ENCODE measurements at regions of chr7 and their contacts with region 1.

Region 1: DNA sequence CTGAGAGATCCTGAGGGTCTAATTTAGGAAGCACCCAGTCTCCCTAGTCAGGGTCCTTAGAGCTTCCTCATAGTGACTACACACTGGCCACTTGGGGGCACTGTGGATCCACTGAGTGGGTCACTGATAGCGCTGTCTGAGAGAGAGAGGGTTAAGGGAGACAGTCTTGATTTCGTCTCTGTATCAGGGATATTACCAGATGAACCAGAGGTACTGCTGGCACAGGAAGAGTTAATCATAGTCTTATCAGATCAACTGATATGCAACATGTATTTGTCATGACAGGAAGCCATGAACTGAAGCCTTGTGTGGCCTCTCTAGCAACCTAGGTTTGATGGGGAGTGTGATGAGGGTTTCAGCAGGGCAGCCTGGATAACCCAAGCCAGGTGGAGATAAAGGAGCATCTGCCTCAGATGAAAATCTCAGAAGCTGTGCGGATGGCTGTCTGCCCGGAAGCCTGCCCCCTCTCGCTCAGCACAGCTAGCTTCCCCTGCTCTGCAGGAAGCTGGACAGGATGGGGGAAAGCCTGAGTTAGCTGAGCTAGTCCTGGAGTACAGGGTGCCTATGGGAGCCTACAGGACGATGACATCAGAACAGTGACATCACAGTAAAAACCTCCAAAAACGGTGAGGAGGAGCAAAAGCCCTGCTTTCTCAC is 214.0 kb upstream of the PRSS1 start:
- DNase-seq: peak; percentile 40 to 78 (median 68)
- ATAC-seq: peak; percentile 93
- H3K4me3 ChIP-seq: peak overlapping the region; percentile 10
- H3K4me3 Mint-ChIP-seq: peak overlapping the region; percentile 54 to 87 (median 70)
- H3K27ac ChIP-seq: peak overlapping the region; percentile 47
- H3K27ac Mint-ChIP-seq: peak overlapping the region; percentile 61 to 91 (median 77)
- H3K4me1 ChIP-seq: peaks cover 3 to 31% of the 10 kb centered on the region in 2 donors
- H3K4me1 Mint-ChIP-seq: peaks cover 4 to 38% (median 31%) of the 10 kb centered on the region in 7 donors
- H3K27me3 ChIP-seq: no peaks in the 10 kb centered on the region
- H3K27me3 Mint-ChIP-seq: peaks cover 0 to 5% (median 0%) of the 10 kb centered on the region in 5 donors

Region 2: DNA sequence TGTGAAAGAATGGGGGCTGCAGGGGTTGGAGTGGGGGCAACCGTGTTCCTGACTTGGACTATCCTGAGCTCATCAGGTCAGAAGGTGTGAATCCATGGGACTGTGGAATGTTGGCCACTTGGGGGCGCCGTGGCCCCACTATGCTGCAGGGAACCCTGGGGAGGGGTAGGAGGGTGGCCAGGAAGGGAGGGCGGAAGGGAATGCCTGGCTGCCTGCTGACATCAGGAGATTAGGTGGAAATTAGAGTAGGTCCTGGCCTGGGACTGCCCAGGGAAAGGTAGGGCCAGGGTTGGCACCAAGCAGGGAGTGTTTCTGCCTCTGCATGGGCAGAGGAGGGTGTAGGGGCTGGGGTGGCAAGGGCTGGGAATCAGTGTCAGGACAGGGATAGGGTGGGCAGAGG is 211.5 kb before region 1 on chr7:
- CTCF ChIA-PET with region 1: no interaction called
- POLR2A ChIA-PET with region 1: no interaction called
- intact Hi-C with region 1: no loop called
- DNase-seq: peak in 5 of 9 donors; percentile 25 to 44 (median 41)
- ATAC-seq: peak; percentile 40
- H3K4me3 ChIP-seq: no peak overlapping the region
- H3K4me3 Mint-ChIP-seq: peak overlapping the region in 7 of 10 donors; percentile 4 to 65 (median 54)
- H3K27ac ChIP-seq: peak overlapping the region; percentile 34
- H3K27ac Mint-ChIP-seq: peak overlapping the region; percentile 17 to 96 (median 80)
- H3K4me1 ChIP-seq: peaks cover 0 to 24% of the 10 kb centered on the region in 2 donors
- H3K4me1 Mint-ChIP-seq: peaks cover 5 to 51% (median 34%) of the 10 kb centered on the region in 7 donors
- H3K27me3 ChIP-seq: no peaks in the 10 kb centered on the region
- H3K27me3 Mint-ChIP-seq: peaks cover 0 to 23% (median 4%) of the 10 kb centered on the region in 5 donors

Region 3: GRCh38 chr7:142496545-142497041 is 38.7 kb before region 1 on chr7:
- CTCF ChIA-PET with region 1: interaction called, 5 read pairs
- POLR2A ChIA-PET with region 1: interaction called, 8 read pairs
- intact Hi-C with region 1: loop called in 1 of 2 experiments (anchors 1 kb)
- DNase-seq: peak in 7 of 9 donors; percentile 39 to 58 (median 45)
- ATAC-seq: peak; percentile 71
- H3K4me3 ChIP-seq: peak overlapping the region; percentile 30
- H3K4me3 Mint-ChIP-seq: peak overlapping the region; percentile 41 to 85 (median 70)
- H3K27ac ChIP-seq: peak overlapping the region; percentile 64
- H3K27ac Mint-ChIP-seq: peak overlapping the region; percentile 33 to 93 (median 77)
- H3K4me1 ChIP-seq: peaks cover 5 to 46% of the 10 kb centered on the region in 2 donors
- H3K4me1 Mint-ChIP-seq: peaks cover 15 to 72% (median 65%) of the 10 kb centered on the region in 7 donors
- H3K27me3 ChIP-seq: no peaks in the 10 kb centered on the region
- H3K27me3 Mint-ChIP-seq: peaks cover 0 to 9% (median 0%) of the 10 kb centered on the region in 5 donors

Region 4: GRCh38 chr7:142523821-142524460 is 11.3 kb before region 1 on chr7:
- CTCF ChIA-PET with region 1: interaction called, 12 read pairs
- POLR2A ChIA-PET with region 1: interaction called, 5 read pairs
- intact Hi-C with region 1: no loop called
- DNase-seq: no peak
- ATAC-seq: no peak
- H3K4me3 ChIP-seq: no peak overlapping the region
- H3K4me3 Mint-ChIP-seq: no peak overlapping the region
- H3K27ac ChIP-seq: no peak overlapping the region
- H3K27ac Mint-ChIP-seq: peak overlapping the region in 1 of 9 donors; percentile 52
- H3K4me1 ChIP-seq: peaks cover 0 to 14% of the 10 kb centered on the region in 2 donors
- H3K4me1 Mint-ChIP-seq: peaks cover 11 to 31% (median 22%) of the 10 kb centered on the region in 7 donors
- H3K27me3 ChIP-seq: no peaks in the 10 kb centered on the region
- H3K27me3 Mint-ChIP-seq: peaks cover 0 to 27% (median 0%) of the 10 kb centered on the region in 5 donors

Region 5: GRCh38 chr7:142587578-142588191 is 52.4 kb after region 1 on chr7:
- CTCF ChIA-PET with region 1: interaction called, 12 read pairs
- POLR2A ChIA-PET with region 1: no interaction called
- intact Hi-C with region 1: loop called (anchors 1 kb)
- DNase-seq: peak in 7 of 9 donors; percentile 18 to 53 (median 34)
- ATAC-seq: peak; percentile 91
- H3K4me3 ChIP-seq: no peak overlapping the region
- H3K4me3 Mint-ChIP-seq: peak overlapping the region in 4 of 10 donors; percentile 5 to 56 (median 24)
- H3K27ac ChIP-seq: no peak overlapping the region
- H3K27ac Mint-ChIP-seq: peak overlapping the region in 4 of 9 donors; percentile 12 to 66 (median 42)
- H3K4me1 ChIP-seq: no peaks in the 10 kb centered on the region
- H3K4me1 Mint-ChIP-seq: peaks cover 0 to 16% (median 5%) of the 10 kb centered on the region in 7 donors
- H3K27me3 ChIP-seq: no peaks in the 10 kb centered on the region
- H3K27me3 Mint-ChIP-seq: no peaks in the 10 kb centered on the region

Region 6: GRCh38 chr7:142632291-142633134 is 97.3 kb after region 1 on chr7:
- CTCF ChIA-PET with region 1: interaction called, 3 read pairs
- POLR2A ChIA-PET with region 1: no interaction called
- intact Hi-C with region 1: loop called in 1 of 2 experiments (anchors 10 kb)
- DNase-seq: peak; percentile 26 to 76 (median 63)
- ATAC-seq: peak; percentile 80
- H3K4me3 ChIP-seq: no peak overlapping the region
- H3K4me3 Mint-ChIP-seq: peak overlapping the region in 5 of 10 donors; percentile 6 to 63 (median 38)
- H3K27ac ChIP-seq: no peak overlapping the region
- H3K27ac Mint-ChIP-seq: peak overlapping the region in 7 of 9 donors; percentile 13 to 84 (median 46)
- H3K4me1 ChIP-seq: no peaks in the 10 kb centered on the region
- H3K4me1 Mint-ChIP-seq: peaks cover 4 to 17% (median 11%) of the 10 kb centered on the region in 7 donors
- H3K27me3 ChIP-seq: no peaks in the 10 kb centered on the region
- H3K27me3 Mint-ChIP-seq: peaks cover 0 to 15% (median 0%) of the 10 kb centered on the region in 5 donors

Region 7: DNA sequence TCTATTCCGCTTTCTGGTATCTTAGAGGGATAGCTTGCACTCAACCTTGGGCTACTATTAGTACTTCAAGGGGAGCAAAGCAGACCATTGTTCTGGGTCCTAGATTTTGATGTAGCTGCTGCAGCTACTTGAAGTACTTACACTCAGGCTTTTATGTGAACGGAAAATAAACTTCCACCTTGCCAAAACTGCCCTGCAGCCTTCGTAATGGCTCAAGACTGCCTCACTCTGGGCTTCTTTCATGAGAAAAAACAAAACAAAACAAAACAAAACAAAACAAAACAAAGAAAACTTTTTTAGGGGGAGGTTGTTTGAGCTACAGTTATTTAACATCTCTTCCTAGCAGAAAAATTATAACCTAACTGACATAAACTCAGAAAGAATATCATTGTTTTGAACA is 300.2 kb after region 1 on chr7:
- CTCF ChIA-PET with region 1: interaction called, 3 read pairs
- POLR2A ChIA-PET with region 1: interaction called, 4 read pairs
- intact Hi-C with region 1: loop called in 1 of 2 experiments (anchors 1 kb)
- DNase-seq: peak in 5 of 9 donors; percentile 29 to 57 (median 42)
- ATAC-seq: no peak
- H3K4me3 ChIP-seq: no peak overlapping the region
- H3K4me3 Mint-ChIP-seq: peak overlapping the region in 5 of 10 donors; percentile 18 to 61 (median 45)
- H3K27ac ChIP-seq: no peak overlapping the region
- H3K27ac Mint-ChIP-seq: peak overlapping the region in 8 of 9 donors; percentile 15 to 88 (median 70)
- H3K4me1 ChIP-seq: no peaks in the 10 kb centered on the region
- H3K4me1 Mint-ChIP-seq: peaks cover 2 to 34% (median 16%) of the 10 kb centered on the region in 7 donors
- H3K27me3 ChIP-seq: no peaks in the 10 kb centered on the region
- H3K27me3 Mint-ChIP-seq: peaks cover 0 to 4% (median 0%) of the 10 kb centered on the region in 5 donors

Region 8: GRCh38 chr7:142866361-142867058 is 331.3 kb after region 1 on chr7:
- CTCF ChIA-PET with region 1: interaction called, 6 read pairs
- POLR2A ChIA-PET with region 1: no interaction called
- intact Hi-C with region 1: loop called in 1 of 2 experiments (anchors 1 kb)
- DNase-seq: peak in 4 of 9 donors; percentile 7 to 27 (median 13)
- ATAC-seq: peak; percentile 52
- H3K4me3 ChIP-seq: no peak overlapping the region
- H3K4me3 Mint-ChIP-seq: peak overlapping the region in 1 of 10 donors; percentile 20
- H3K27ac ChIP-seq: no peak overlapping the region
- H3K27ac Mint-ChIP-seq: peak overlapping the region in 4 of 9 donors; percentile 32 to 76 (median 50)
- H3K4me1 ChIP-seq: no peaks in the 10 kb centered on the region
- H3K4me1 Mint-ChIP-seq: peaks cover 0 to 7% (median 4%) of the 10 kb centered on the region in 7 donors
- H3K27me3 ChIP-seq: no peaks in the 10 kb centered on the region
- H3K27me3 Mint-ChIP-seq: no peaks in the 10 kb centered on the region

Measured in naive thymus-derived CD4-positive, alpha-beta T cell (primary cell).